SK-N-SH (cell line): ENCODE measurements at regions of chr9 and their contacts with region 1.

Region 1: GRCh38 chr9:19174127-19174912 is 47.0 kb upstream of the PLIN2 start:
- DNase-seq: peak; percentile 71
- H3K4me3 ChIP-seq: 0 out of 4 replicates have a peak overlapping the region, but pooled peaks of 1 of the 2 experiments have one; percentile 2
- H3K27ac ChIP-seq: no peak overlapping the region
- H3K4me1 ChIP-seq: no peaks in the 10 kb centered on the region
- H3K27me3 ChIP-seq: no peaks in the 10 kb centered on the region
- CTCF ChIP-seq: peak; percentile 75
- EP300 ChIP-seq: no peak
- RAD21 ChIP-seq: peak; percentile 83

Region 2: GRCh38 chr9:18726546-18726945 is 447.8 kb before region 1 on chr9:
- CTCF ChIA-PET with region 1: no interaction called
- POLR2A ChIA-PET with region 1: no interaction called
- DNase-seq: no peak
- H3K4me3 ChIP-seq: no peak overlapping the region; a peak in 1 of 4 replicates
- H3K27ac ChIP-seq: peak overlapping the region; percentile 42 to 77; a peak in 2 of 4 replicates
- H3K4me1 ChIP-seq: peaks cover 0 to 11% of the 10 kb centered on the region in 2 experiments; a peak in 2 of 4 replicates
- H3K27me3 ChIP-seq: no peaks in the 10 kb centered on the region
- CTCF ChIP-seq: no peak
- EP300 ChIP-seq: peak in 1 of 2 experiments; percentile 26; a peak in 1 of 4 replicates
- RAD21 ChIP-seq: no peak

Region 3: DNA sequence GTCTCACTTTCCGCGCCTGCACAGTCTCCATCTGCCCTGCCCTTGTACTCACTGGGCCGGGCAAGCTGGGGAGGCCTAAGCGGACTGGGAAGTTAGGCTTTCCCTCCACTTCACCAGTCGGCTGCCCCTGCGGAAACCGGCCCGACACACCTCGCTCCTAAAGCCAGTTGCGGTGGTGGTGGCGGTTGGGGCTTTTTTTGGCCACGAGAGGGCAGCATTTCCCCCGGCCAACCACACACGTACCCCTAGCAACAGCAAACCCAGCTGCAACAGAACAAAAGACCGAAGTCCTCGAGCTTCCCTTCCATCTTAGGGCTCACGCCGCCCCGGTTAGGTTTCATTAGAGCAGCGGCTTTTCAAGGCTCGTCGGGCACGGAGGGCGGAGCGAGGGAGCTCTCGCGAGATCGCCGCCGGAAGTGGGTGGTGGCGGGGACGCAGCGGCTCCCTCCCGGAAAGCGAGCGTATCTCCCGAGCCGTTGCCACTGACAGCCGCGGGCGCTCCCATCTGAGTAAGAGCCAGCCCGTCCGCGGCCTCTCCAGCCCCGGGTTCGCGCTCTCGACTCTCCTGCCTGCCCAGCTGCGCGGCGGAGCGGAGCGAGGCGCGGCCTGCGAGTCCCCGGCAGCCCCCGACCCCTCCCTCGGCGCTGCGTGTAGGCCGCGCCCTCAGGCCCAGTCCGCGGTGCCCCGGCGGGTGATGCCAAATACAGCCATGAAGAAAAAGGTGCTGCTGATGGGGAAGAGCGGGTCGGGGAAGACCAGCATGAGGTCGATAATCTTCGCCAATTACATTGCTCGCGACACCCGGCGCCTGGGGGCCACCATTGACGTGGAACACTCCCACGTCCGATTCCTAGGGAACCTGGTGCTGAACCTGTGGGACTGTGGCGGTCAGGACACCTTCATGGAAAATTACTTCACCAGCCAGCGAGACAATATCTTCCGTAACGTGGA is 125.1 kb before region 1 on chr9 and contains the start of gene RRAGA:
- CTCF ChIA-PET with region 1: interaction called, 44 read pairs
- POLR2A ChIA-PET with region 1: interaction called, 5 read pairs
- DNase-seq: peak; percentile 97
- H3K4me3 ChIP-seq: peak within 1 kb of the TSS; percentile 86 to 87
- H3K27ac ChIP-seq: peak within 1 kb of the TSS; percentile 93 to 95
- H3K4me1 ChIP-seq: peaks cover 0 to 13% of the 10 kb centered on the region in 2 experiments; a peak in 2 of 4 replicates
- H3K27me3 ChIP-seq: no peaks in the 10 kb centered on the region
- CTCF ChIP-seq: peak; percentile 92
- EP300 ChIP-seq: no peak
- RAD21 ChIP-seq: peak; percentile 59
- polyA plus RNA-seq, gene RRAGA: 103 and 106 TPM in 2 replicates

Region 4: DNA sequence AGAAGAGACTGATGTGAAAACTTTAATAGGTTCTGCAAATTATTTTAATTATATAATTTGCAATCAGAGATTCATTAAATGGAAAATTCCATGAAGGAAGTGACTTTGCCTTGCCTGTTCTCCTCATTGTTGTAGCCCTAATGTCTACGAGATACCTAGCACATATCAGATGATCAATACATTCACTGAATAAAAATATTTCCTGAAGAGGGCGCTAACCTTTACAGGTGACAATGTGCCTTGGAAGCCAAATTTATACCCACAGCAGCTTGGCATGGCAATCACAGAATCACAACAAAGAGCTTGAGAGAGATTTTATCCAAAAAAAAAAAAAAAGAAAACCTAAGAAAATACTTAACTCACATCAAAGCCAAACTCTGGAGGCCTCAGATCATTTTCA is 89.0 kb before region 1 on chr9:
- CTCF ChIA-PET with region 1: interaction called, 19 read pairs
- POLR2A ChIA-PET with region 1: no interaction called
- DNase-seq: peak; percentile 30
- H3K4me3 ChIP-seq: no peak overlapping the region
- H3K27ac ChIP-seq: no peak overlapping the region
- H3K4me1 ChIP-seq: no peaks in the 10 kb centered on the region
- H3K27me3 ChIP-seq: no peaks in the 10 kb centered on the region
- CTCF ChIP-seq: peak; percentile 61
- EP300 ChIP-seq: no peak
- RAD21 ChIP-seq: peak; percentile 17; the same call in 1 of the 2 replicates

Region 5: DNA sequence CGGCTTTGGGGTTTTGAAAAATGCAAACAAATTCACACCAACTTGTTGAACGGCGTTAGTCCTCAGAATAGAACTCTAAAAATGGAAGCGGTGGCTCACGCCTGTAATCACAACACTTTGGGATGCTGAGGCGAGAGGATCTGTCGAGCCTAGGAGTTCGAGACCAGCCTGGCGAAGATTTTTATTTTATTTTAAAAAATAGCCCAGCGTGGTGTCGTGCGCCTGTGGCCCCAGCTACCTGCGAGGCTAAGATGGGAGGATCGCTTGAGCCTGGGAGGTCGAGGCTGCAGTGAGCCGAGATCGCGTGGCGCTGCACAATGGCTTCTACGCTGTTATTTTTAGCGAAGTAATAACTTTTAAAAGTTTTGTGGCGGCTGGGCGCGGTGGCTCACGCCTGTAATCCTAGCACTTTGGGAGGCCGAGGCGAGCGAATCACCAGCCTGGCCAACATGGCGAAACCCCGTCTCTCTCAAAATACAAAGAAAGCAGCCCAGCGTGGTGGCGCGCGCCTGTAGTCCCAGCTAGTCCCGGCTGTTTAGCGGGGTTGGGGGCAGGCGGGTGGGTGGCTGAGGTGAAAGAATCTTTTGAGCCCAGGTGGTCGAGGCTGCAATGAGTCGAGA is 46.3 kb before region 1 on chr9:
- CTCF ChIA-PET with region 1: interaction called, 10 read pairs
- POLR2A ChIA-PET with region 1: no interaction called
- DNase-seq: peak; percentile 67
- H3K4me3 ChIP-seq: peak overlapping the region; percentile 72 to 76
- H3K27ac ChIP-seq: peak overlapping the region; percentile 24 to 74; a peak in 3 of 4 replicates
- H3K4me1 ChIP-seq: peaks cover 0 to 14% of the 10 kb centered on the region in 2 experiments; a peak in 3 of 4 replicates
- H3K27me3 ChIP-seq: no peaks in the 10 kb centered on the region
- CTCF ChIP-seq: no peak
- EP300 ChIP-seq: no peak
- RAD21 ChIP-seq: no peak

Region 6: GRCh38 chr9:19184144-19184917 is 10.0 kb after region 1 on chr9:
- CTCF ChIA-PET with region 1: interaction called, 17 read pairs
- POLR2A ChIA-PET with region 1: no interaction called
- DNase-seq: peak; percentile 36
- H3K4me3 ChIP-seq: no peak overlapping the region; a peak in 1 of 4 replicates
- H3K27ac ChIP-seq: peak overlapping the region; percentile 53 to 90
- H3K4me1 ChIP-seq: peaks cover 2 to 5% of the 10 kb centered on the region in 2 experiments; a peak in 1 of 4 replicates
- H3K27me3 ChIP-seq: no peaks in the 10 kb centered on the region
- CTCF ChIP-seq: no peak
- EP300 ChIP-seq: no peak
- RAD21 ChIP-seq: no peak

Region 7: DNA sequence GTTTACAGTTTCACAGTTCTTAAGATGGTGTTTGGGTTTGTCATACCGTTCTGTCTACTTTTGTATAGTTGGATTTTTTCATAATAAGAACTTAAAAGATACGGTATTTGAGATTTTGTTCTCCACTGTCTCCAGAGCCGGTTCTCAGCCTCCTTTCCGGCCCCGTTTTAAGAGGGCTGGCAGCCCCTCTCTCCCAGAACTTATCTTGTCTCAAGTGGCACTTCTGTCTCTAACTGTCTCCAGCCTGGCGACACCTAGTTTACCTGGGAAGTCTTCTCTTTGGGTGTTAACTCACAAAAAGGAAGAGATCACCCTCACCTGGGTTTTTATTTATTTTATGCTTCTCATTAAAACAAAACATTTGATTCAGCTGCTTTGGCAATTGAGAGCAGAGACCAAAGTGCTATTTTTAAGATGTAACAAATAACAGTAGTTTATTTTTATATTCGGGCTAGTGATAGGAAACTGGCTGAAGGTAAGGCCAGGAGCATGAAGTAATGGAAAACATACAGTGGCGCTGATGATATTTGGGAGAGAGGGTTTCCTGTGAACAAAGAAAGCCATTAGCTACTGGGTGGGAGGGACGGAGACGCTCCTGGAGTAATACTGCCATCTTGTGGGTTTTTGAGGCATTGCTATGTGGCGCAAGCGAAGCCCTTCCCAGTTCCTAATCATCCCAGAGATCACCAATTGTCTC is 282.8 kb after region 1 on chr9:
- CTCF ChIA-PET with region 1: interaction called, 17 read pairs
- POLR2A ChIA-PET with region 1: no interaction called
- DNase-seq: peak; percentile 84
- H3K4me3 ChIP-seq: peak overlapping the region; percentile 37 to 47
- H3K27ac ChIP-seq: no peak overlapping the region
- H3K4me1 ChIP-seq: peaks cover 0 to 3% of the 10 kb centered on the region in 2 experiments; a peak in 1 of 4 replicates
- H3K27me3 ChIP-seq: no peaks in the 10 kb centered on the region
- CTCF ChIP-seq: peak; percentile 95
- EP300 ChIP-seq: no peak
- RAD21 ChIP-seq: peak; percentile 99